OCI-LY7 (cell line): ENCODE measurements at regions of chr9 and their contacts with region 1.

Region 1: DNA sequence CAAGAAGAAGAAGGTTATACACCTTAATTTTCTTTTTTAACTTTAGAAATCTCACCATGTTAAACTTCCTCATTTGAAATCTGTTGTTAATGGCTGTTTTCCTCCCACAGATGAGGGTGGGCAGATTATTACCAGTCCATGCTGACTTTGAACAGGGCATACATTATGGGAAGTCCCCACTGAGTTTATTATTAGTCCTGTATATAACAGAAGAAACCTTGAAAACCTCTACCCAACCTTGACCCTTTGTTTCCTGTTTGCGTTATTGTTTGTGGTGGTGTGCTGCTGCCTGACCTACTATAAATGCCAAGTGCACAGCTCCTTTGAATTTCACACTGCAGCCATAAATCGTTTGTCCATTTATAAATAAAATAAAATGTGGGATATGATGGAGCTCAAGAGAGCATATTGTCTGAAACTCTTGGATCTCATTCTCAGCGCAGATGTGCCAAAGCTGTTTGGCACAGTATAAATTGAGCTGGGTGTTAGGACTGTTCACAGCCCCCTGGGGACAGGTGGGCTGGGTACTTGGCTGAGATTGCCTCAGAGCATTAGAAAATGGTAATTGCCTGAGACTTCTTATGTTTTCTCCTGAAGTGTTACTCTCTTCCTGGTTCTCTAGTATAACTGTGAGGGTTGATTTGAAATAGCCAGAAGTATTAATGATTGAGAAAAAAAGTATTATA is 139.6 kb downstream of the SPATA31D1 start:
- DNase-seq: peak; percentile 95
- H3K4me3 ChIP-seq: peak overlapping the region; percentile 50
- H3K27ac ChIP-seq: peak overlapping the region; percentile 99
- H3K4me1 ChIP-seq: peaks cover 73% of the 10 kb centered on the region
- CTCF ChIP-seq: no peak

Region 2: GRCh38 chr9:82091610-82092009 is 36.5 kb before region 1 on chr9:
- CTCF ChIA-PET with region 1: interaction called, 3 read pairs
- POLR2A ChIA-PET with region 1: interaction called, 15 read pairs
- intact Hi-C with region 1: no loop called
- DNase-seq: peak; percentile 70
- H3K4me3 ChIP-seq: peak overlapping the region; percentile 55
- H3K27ac ChIP-seq: peak overlapping the region; percentile 52
- H3K4me1 ChIP-seq: peaks cover 44% of the 10 kb centered on the region
- CTCF ChIP-seq: no peak

Region 3: DNA sequence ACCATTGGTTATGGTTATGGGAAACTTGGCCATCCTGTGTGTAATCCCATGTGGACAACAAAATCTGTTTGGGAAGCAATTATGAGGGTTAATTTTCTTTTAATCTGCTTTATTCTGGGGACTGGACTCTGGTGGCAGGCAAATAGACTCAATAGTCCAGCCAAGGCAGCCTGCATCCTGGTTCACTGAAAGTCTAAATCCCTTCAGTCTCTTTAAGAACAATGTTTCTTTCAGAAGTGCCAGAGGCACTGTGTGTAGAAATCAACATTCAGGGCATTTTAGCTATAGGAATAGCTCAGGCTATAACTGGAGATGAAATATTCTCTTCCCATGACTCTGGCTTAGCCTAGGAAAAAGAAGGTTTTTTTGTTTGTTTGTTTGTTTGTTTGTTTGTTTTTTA is 21.6 kb before region 1 on chr9:
- CTCF ChIA-PET with region 1: interaction called, 6 read pairs
- POLR2A ChIA-PET with region 1: interaction called, 36 read pairs
- intact Hi-C with region 1: loop called (anchors 1 kb)
- DNase-seq: no peak
- H3K4me3 ChIP-seq: no peak overlapping the region
- H3K27ac ChIP-seq: no peak overlapping the region
- H3K4me1 ChIP-seq: peaks cover 26% of the 10 kb centered on the region
- CTCF ChIP-seq: no peak

Region 4: GRCh38 chr9:82148901-82149461 is 20.8 kb after region 1 on chr9:
- CTCF ChIA-PET with region 1: interaction called, 3 read pairs
- POLR2A ChIA-PET with region 1: interaction called, 18 read pairs
- intact Hi-C with region 1: no loop called
- DNase-seq: no peak
- H3K4me3 ChIP-seq: no peak overlapping the region
- H3K27ac ChIP-seq: no peak overlapping the region
- H3K4me1 ChIP-seq: no peaks in the 10 kb centered on the region
- CTCF ChIP-seq: no peak